Activated CD4-positive, alpha-beta T cell treated with anti-CD3 and anti-CD28 coated beads, Interleukin-2, amount 10 ng/mL, durations not matched to agents 24 days and 14 days (primary cell): ENCODE measurements at regions of chr1 and their contacts with region 1.

Region 1: GRCh38 chr1:225454733-225455132 is 26.9 kb upstream of the LBR start:
- DNase-seq: peak; percentile 79
- H3K4me3 Mint-ChIP-seq: peak overlapping the region; percentile 75
- H3K27ac Mint-ChIP-seq: peak overlapping the region; percentile 92
- H3K4me1 Mint-ChIP-seq: peaks cover 41% of the 10 kb centered on the region
- H3K27me3 Mint-ChIP-seq: no peaks in the 10 kb centered on the region

Region 2: GRCh38 chr1:225441314-225442122 is 13.2 kb before region 1 on chr1:
- intact Hi-C with region 1: loop called (anchors 1 kb)
- DNase-seq: no peak
- H3K4me3 Mint-ChIP-seq: peak overlapping the region; percentile 61
- H3K27ac Mint-ChIP-seq: peak overlapping the region; percentile 76
- H3K4me1 Mint-ChIP-seq: peaks cover 60% of the 10 kb centered on the region
- H3K27me3 Mint-ChIP-seq: peaks cover 2% of the 10 kb centered on the region